H1 (cell line): ENCODE measurements at regions of chr2 and their contacts with region 1.

Region 1: DNA sequence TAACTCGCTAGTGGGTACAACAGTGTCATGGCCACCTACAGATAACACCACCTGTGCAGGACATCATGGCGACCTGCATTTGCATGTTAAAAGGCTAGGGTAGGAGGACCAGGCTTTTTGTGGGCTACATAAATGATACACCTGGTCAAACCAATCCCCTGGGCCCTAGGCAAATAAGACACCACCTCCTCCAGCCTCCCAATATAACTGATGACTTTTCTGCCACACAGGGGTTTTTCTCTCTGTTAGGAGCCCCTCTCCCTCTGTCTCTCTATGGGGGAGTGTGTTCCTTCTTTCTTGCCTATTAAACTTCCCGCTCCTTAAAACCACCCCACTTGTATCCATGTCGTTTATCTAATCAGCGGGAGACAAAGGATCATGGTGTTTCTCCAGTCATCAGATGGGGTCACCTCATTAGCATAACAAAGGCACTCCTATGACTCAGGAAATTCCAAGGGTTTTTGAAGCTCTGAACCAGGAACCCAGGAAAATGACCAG is 10.8 kb upstream of the BUB1 start:
- DNase-seq: peak; percentile 63 to 77
- H3K4me3 ChIP-seq: peak overlapping the region in 3 of 4 experiments; percentile 28 to 55 (median 32); a peak in 7 of 8 replicates
- H3K27ac ChIP-seq: peak overlapping the region; percentile 87
- H3K4me1 ChIP-seq: peaks cover 6 to 17% (median 12%) of the 10 kb centered on the region in 4 experiments; a peak in 5 of 7 replicates
- H3K27me3 ChIP-seq: peaks cover 0 to 11% (median 5%) of the 10 kb centered on the region in 4 experiments; a peak in 5 of 7 replicates
- CTCF ChIP-seq: no peak
- EP300 ChIP-seq: peak in 1 of 2 experiments; percentile 98; a peak in 2 of 3 replicates
- POLR2A ChIP-seq: peak; percentile 46 to 53
- RAD21 ChIP-seq: no peak

Region 2: DNA sequence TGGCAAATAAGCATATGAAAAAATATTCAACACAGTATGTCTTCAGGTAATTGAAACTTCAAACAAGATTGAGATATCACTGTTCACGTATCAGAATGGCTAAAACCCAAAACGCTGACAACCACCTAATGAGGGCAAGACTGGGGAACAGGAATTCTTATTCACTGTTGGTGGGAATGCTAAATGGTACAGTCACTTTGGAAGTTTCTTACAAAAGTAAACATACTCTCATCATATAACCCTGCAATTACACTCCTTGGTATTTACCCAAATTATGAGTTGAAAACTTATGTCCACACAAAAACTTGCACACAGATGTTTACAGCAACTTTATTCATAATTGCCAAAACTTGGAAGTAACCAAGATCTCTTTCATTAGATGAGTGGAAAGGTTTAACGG is 40.9 kb before region 1 on chr2:
- CTCF ChIA-PET with region 1: no interaction called
- POLR2A ChIA-PET with region 1: no interaction called
- DNase-seq: no peak
- H3K4me3 ChIP-seq: no peak overlapping the region
- H3K27ac ChIP-seq: no peak overlapping the region
- H3K4me1 ChIP-seq: no peaks in the 10 kb centered on the region
- H3K27me3 ChIP-seq: no peaks in the 10 kb centered on the region
- CTCF ChIP-seq: no peak
- EP300 ChIP-seq: no peak
- POLR2A ChIP-seq: no peak
- RAD21 ChIP-seq: no peak

Region 3: DNA sequence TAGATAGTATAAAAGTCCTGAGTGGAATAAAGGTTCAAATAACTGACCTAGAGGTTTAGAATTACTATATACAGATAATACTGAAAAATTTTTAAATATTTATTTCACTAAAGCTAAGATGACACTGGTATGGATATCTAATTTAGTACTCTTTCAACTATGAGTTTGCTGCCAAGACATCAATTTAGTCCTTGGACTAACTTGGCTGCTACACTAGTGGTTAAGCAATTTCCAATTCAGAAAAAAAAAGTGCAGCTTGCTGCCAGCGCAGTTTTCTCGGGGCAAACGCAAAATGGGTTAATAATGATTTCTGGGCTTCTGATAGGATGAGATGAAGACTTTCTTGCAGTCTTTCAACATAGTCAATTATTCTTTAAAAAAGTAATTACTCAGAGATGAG is 21.6 kb before region 1 on chr2:
- CTCF ChIA-PET with region 1: no interaction called
- POLR2A ChIA-PET with region 1: no interaction called
- DNase-seq: no peak
- H3K4me3 ChIP-seq: no peak overlapping the region
- H3K27ac ChIP-seq: no peak overlapping the region
- H3K4me1 ChIP-seq: no peaks in the 10 kb centered on the region
- H3K27me3 ChIP-seq: no peaks in the 10 kb centered on the region
- CTCF ChIP-seq: no peak
- EP300 ChIP-seq: no peak
- POLR2A ChIP-seq: no peak
- RAD21 ChIP-seq: no peak

Region 4: GRCh38 chr2:110677530-110678456 is 10.8 kb before region 1 on chr2 and contains the start of gene BUB1:
- CTCF ChIA-PET with region 1: interaction called, 5 read pairs
- POLR2A ChIA-PET with region 1: interaction called, 49 read pairs
- DNase-seq: peak; percentile 87 to 98
- H3K4me3 ChIP-seq: peak within 1 kb of the TSS; percentile 79 to 91 (median 81)
- H3K27ac ChIP-seq: peak within 1 kb of the TSS; percentile 67
- H3K4me1 ChIP-seq: peaks cover 10 to 22% (median 12%) of the 10 kb centered on the region in 4 experiments
- H3K27me3 ChIP-seq: peaks cover 0 to 3% (median 0%) of the 10 kb centered on the region in 4 experiments; a peak in 2 of 7 replicates
- CTCF ChIP-seq: no peak
- EP300 ChIP-seq: no peak
- POLR2A ChIP-seq: peak; percentile 76 to 85
- RAD21 ChIP-seq: peak in 1 of 2 experiments; percentile 8; a peak in 1 of 4 replicates
- total RNA-seq, gene BUB1: 113 and 118 TPM in 2 replicates

Region 5: GRCh38 chr2:110732422-110733413 is 44.1 kb after region 1 on chr2 and contains the start of gene ACOXL:
- CTCF ChIA-PET with region 1: no interaction called
- POLR2A ChIA-PET with region 1: interaction called, 19 read pairs
- DNase-seq: peak; percentile 68 to 89
- H3K4me3 ChIP-seq: peak within 1 kb of the TSS; percentile 61 to 81 (median 79)
- H3K27ac ChIP-seq: no peak within 1 kb of the TSS
- H3K4me1 ChIP-seq: peaks cover 3 to 18% (median 10%) of the 10 kb centered on the region in 4 experiments
- H3K27me3 ChIP-seq: peaks cover 0 to 10% (median 2%) of the 10 kb centered on the region in 4 experiments; a peak in 3 of 7 replicates
- CTCF ChIP-seq: no peak
- EP300 ChIP-seq: peak in 1 of 2 experiments; percentile 8; a peak in 1 of 3 replicates
- POLR2A ChIP-seq: peak in 1 of 2 experiments; percentile 49; a peak in 1 of 3 replicates
- RAD21 ChIP-seq: peak in 1 of 2 experiments; percentile 23; a peak in 1 of 4 replicates
- total RNA-seq, gene ACOXL: 20.6 and 20.8 TPM in 2 replicates